ENCODE measurements at regions of chr14 and their contacts with region 1.

Region 1: DNA sequence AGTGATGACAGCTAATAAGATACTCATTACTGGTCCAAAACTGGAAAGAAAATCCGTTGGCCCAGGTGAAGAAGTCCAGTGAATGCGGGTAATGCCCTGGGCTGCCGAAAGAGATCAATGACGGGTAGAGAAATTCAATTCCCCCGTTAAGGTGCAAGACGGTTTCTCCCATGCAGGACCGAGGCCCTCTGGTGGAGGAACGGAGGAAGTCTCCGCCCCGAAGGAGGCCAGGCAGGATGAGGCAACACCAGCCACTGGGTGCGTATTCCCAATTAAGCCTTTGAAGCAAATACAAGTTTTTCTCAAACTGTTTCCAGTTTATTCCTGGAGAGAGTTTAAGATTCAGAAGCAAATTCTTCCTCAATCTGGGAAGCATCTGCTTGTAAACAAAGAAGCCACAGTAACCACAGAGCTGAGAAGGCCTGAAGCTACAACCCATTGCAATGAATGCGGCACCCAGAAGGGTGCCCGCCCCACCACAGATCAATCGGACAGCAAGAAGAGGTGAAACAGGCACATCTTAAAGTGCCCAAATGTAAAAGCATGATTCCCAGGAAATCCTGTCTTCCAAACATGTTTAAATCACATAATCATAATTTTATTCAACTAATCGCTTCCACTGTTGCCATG is 118.5 kb downstream of the TTC7B start:
- DNase-seq: peak; percentile 44 to 84
- H3K4me3 ChIP-seq: no peak overlapping the region
- H3K27ac ChIP-seq: no peak overlapping the region
- H3K4me1 ChIP-seq: peaks cover 0 to 4% (median 0%) of the 10 kb centered on the region in 4 experiments; a peak in 2 of 7 replicates
- H3K27me3 ChIP-seq: no peaks in the 10 kb centered on the region
- CTCF ChIP-seq: peak; percentile 91 to 99 (median 97)
- EP300 ChIP-seq: no peak
- POLR2A ChIP-seq: no peak
- RAD21 ChIP-seq: peak; percentile 99

Region 2: GRCh38 chr14:90399541-90400444 is 297.9 kb before region 1 on chr14:
- CTCF ChIA-PET with region 1: interaction called, 11 read pairs
- POLR2A ChIA-PET with region 1: interaction called, 5 read pairs
- DNase-seq: peak; percentile 68 to 83
- H3K4me3 ChIP-seq: peak overlapping the region in 1 of 4 experiments; percentile 88; a peak in 2 of 8 replicates
- H3K27ac ChIP-seq: no peak overlapping the region
- H3K4me1 ChIP-seq: peaks cover 0 to 3% (median 1%) of the 10 kb centered on the region in 4 experiments; a peak in 2 of 7 replicates
- H3K27me3 ChIP-seq: no peaks in the 10 kb centered on the region
- CTCF ChIP-seq: peak; percentile 99 to 100 (median 100)
- EP300 ChIP-seq: peak in 1 of 2 experiments; percentile 54; a peak in 1 of 3 replicates
- POLR2A ChIP-seq: no peak
- RAD21 ChIP-seq: peak; percentile 96

Region 3: GRCh38 chr14:90513161-90514014 is 184.3 kb before region 1 on chr14:
- CTCF ChIA-PET with region 1: interaction called, 17 read pairs
- POLR2A ChIA-PET with region 1: interaction called, 3 read pairs
- DNase-seq: no peak
- H3K4me3 ChIP-seq: no peak overlapping the region
- H3K27ac ChIP-seq: peak overlapping the region; percentile 71
- H3K4me1 ChIP-seq: peaks cover 4 to 42% (median 34%) of the 10 kb centered on the region in 4 experiments
- H3K27me3 ChIP-seq: no peaks in the 10 kb centered on the region; a peak in 1 of 7 replicates
- CTCF ChIP-seq: no peak
- EP300 ChIP-seq: peak; percentile 43 to 94; a peak in 2 of 3 replicates
- POLR2A ChIP-seq: no peak; a peak in 1 of 3 replicates
- RAD21 ChIP-seq: peak in 1 of 2 experiments; percentile 11; a peak in 1 of 4 replicates

Region 4: DNA sequence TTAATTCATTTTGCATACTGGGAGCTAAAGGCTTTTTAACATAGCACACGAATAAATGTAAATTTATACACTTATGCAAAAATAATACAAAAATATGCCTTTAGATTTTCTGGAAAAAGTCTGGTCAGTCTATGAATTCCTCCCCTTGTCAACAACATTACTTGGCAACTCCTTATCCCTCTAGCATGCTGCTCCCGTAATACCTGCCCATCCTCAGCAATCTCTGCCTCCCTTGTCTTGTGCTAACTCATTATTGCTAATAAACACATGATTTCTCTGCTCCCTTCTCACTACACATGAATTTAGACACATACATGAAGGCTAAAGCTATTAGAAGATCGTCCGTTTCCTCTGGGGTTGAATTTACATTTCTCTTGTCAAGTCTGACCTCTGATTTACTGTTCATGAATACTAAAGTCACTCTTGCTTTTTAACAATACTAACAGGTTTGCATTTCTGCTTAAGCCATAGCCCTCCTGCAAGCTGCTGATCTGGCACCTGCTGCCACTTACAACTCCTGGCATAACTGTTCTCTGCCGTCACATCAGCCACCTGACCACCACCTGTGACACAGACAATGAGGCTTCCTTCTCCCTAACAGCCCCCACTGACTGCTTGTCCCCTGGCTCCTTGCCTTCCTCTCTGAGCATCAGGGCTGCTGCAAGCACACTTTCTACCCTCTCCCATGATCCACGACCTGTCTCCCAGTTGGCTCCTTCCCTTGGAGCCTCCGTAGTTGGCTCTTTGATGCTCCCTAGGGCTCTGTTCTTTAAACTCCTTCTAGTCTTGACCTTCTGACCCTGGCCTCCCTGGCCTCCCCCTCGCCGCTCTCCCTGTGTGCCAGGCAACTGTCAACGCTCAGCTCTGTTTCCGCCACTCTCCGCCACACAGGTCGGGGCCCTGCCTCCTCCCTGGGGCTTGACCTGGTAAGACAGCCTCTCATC is 123.2 kb before region 1 on chr14:
- CTCF ChIA-PET with region 1: interaction called, 15 read pairs
- POLR2A ChIA-PET with region 1: no interaction called
- DNase-seq: no peak
- H3K4me3 ChIP-seq: no peak overlapping the region; a peak in 1 of 8 replicates
- H3K27ac ChIP-seq: no peak overlapping the region
- H3K4me1 ChIP-seq: peaks cover 9 to 30% (median 20%) of the 10 kb centered on the region in 4 experiments
- H3K27me3 ChIP-seq: 0 out of 7 replicates have a peak, but pooled peaks cover 0 to 5% (median 0%) of the 10 kb centered on the region in 4 experiments
- CTCF ChIP-seq: no peak
- EP300 ChIP-seq: no peak; a peak in 1 of 3 replicates
- POLR2A ChIP-seq: no peak
- RAD21 ChIP-seq: no peak

Region 5: DNA sequence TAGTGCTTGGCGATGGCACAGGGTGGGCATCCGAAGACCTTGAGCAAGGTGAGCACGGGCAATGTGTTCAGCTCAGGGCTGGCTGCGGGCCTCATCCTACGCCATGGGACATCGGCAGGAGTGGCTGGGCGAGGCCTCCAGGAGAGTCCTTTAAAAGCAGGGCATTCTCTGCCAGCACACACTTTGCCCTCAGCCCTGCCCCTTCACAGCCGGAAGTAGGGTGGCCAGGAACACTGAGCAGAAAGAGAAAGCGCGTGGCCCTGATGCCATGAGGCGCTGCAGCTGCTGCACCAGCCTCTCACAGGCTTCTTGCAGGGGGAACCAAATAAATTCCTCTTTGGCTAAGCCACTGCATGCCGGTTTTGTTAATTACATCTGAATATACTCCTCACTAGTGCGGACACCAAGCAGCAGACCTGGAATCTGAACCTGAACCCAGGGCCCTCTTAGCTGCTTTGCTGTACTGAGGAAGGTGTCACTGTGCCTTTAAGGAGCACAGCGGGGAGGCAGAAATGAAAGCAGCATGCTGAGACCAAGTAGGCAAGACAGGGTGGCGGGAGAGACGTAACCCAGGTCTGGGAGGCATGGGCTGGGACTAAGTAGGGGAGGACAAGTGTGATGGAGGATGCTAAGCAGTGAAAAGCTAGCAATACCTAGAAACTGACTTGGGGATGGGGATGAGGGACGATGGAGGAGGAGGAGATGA is 36.7 kb before region 1 on chr14:
- CTCF ChIA-PET with region 1: interaction called, 16 read pairs
- POLR2A ChIA-PET with region 1: no interaction called
- DNase-seq: peak in 1 of 2 experiments; percentile 56
- H3K4me3 ChIP-seq: no peak overlapping the region
- H3K27ac ChIP-seq: no peak overlapping the region
- H3K4me1 ChIP-seq: peaks cover 6 to 12% (median 9%) of the 10 kb centered on the region in 4 experiments
- H3K27me3 ChIP-seq: no peaks in the 10 kb centered on the region
- CTCF ChIP-seq: no peak
- EP300 ChIP-seq: no peak
- POLR2A ChIP-seq: no peak
- RAD21 ChIP-seq: no peak

Region 6: GRCh38 chr14:90687680-90688079 is 10.0 kb before region 1 on chr14:
- CTCF ChIA-PET with region 1: interaction called, 29 read pairs
- POLR2A ChIA-PET with region 1: interaction called, 5 read pairs
- DNase-seq: no peak
- H3K4me3 ChIP-seq: no peak overlapping the region
- H3K27ac ChIP-seq: no peak overlapping the region
- H3K4me1 ChIP-seq: no peaks in the 10 kb centered on the region
- H3K27me3 ChIP-seq: no peaks in the 10 kb centered on the region
- CTCF ChIP-seq: no peak
- EP300 ChIP-seq: no peak
- POLR2A ChIP-seq: no peak
- RAD21 ChIP-seq: no peak

Region 7: DNA sequence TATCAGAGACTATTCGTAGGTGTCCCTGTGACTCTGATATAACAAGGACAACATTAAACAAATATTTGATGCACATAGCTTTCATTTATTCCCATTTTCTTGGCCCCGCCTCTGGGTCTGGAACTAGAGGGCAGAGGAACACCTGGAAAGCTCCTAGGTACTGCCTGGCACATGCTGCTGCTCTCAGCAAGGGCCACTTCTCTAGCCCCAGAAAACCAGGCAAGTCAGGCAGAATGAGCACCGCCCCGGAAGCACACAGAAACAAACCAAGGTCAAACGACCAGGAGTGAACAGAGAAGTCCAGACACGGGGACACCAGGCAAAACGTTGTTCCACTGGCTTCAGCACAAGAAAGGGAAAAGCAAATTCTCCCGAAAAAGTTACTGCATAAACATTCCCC is 42.4 kb after region 1 on chr14:
- CTCF ChIA-PET with region 1: no interaction called
- POLR2A ChIA-PET with region 1: no interaction called
- DNase-seq: no peak
- H3K4me3 ChIP-seq: no peak overlapping the region
- H3K27ac ChIP-seq: no peak overlapping the region
- H3K4me1 ChIP-seq: no peaks in the 10 kb centered on the region
- H3K27me3 ChIP-seq: no peaks in the 10 kb centered on the region
- CTCF ChIP-seq: no peak
- EP300 ChIP-seq: no peak
- POLR2A ChIP-seq: no peak
- RAD21 ChIP-seq: no peak

Region 8: GRCh38 chr14:90758028-90758889 is 60.6 kb after region 1 on chr14:
- CTCF ChIA-PET with region 1: interaction called, 45 read pairs
- POLR2A ChIA-PET with region 1: no interaction called
- DNase-seq: peak; percentile 89 to 97
- H3K4me3 ChIP-seq: peak overlapping the region; percentile 16 to 53 (median 30); a peak in 5 of 8 replicates
- H3K27ac ChIP-seq: peak overlapping the region; percentile 79; the same call in 1 of the 2 replicates
- H3K4me1 ChIP-seq: peaks cover 0 to 11% (median 4%) of the 10 kb centered on the region in 4 experiments; a peak in 6 of 7 replicates
- H3K27me3 ChIP-seq: peaks cover 0 to 4% (median 1%) of the 10 kb centered on the region in 4 experiments; a peak in 3 of 7 replicates
- CTCF ChIP-seq: peak; percentile 93 to 94 (median 94)
- EP300 ChIP-seq: no peak
- POLR2A ChIP-seq: no peak
- RAD21 ChIP-seq: peak; percentile 72 to 78

Measured in H1 (cell line).